H1 (cell line): ENCODE measurements at regions of chr6 and their contacts with region 1.

Region 1: DNA sequence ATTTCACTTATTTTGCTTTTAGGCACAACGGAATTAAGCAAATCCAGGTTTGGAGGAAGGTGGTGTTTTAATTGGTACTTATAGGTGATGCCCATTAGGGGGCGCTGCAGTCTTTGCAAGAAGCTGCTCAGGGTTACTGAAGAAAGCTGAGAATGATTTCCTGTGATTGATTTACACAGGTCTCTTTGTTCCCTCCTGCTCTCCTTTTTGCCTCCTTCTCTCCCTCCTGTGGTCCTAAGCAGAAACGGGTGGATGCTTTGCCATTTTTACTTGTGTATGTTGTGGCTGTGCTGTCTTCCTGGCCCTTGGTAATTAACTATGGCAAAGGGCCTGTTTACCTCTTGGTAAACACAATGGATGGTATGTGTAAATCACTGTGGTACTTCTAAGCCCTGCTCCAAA is 97.8 kb downstream of the ANKS1A start:
- DNase-seq: peak; percentile 25 to 77
- H3K4me3 ChIP-seq: no peak overlapping the region
- H3K27ac ChIP-seq: 0 out of 2 replicates have a peak overlapping the region, but pooled peaks have one; percentile 13
- H3K4me1 ChIP-seq: peaks cover 0 to 6% (median 2%) of the 10 kb centered on the region in 4 experiments; a peak in 4 of 7 replicates
- H3K27me3 ChIP-seq: no peaks in the 10 kb centered on the region
- CTCF ChIP-seq: peak in 2 of 3 experiments; percentile 86; a peak in 3 of 4 replicates
- EP300 ChIP-seq: no peak
- POLR2A ChIP-seq: no peak
- RAD21 ChIP-seq: peak; percentile 94 to 96

Region 2: GRCh38 chr6:35011096-35012041 is 24.5 kb after region 1 on chr6:
- CTCF ChIA-PET with region 1: interaction called, 20 read pairs
- POLR2A ChIA-PET with region 1: no interaction called
- DNase-seq: no peak
- H3K4me3 ChIP-seq: no peak overlapping the region
- H3K27ac ChIP-seq: no peak overlapping the region
- H3K4me1 ChIP-seq: peaks cover 0 to 6% (median 0%) of the 10 kb centered on the region in 4 experiments; a peak in 2 of 7 replicates
- H3K27me3 ChIP-seq: no peaks in the 10 kb centered on the region
- CTCF ChIP-seq: no peak
- EP300 ChIP-seq: no peak
- POLR2A ChIP-seq: no peak
- RAD21 ChIP-seq: no peak

Region 3: GRCh38 chr6:35057449-35058357 is 70.9 kb after region 1 on chr6:
- CTCF ChIA-PET with region 1: interaction called, 20 read pairs
- POLR2A ChIA-PET with region 1: no interaction called
- DNase-seq: no peak
- H3K4me3 ChIP-seq: no peak overlapping the region
- H3K27ac ChIP-seq: no peak overlapping the region
- H3K4me1 ChIP-seq: peaks cover 0 to 1% (median under 1%) of the 10 kb centered on the region in 4 experiments; a peak in 2 of 7 replicates
- H3K27me3 ChIP-seq: no peaks in the 10 kb centered on the region
- CTCF ChIP-seq: no peak
- EP300 ChIP-seq: no peak
- POLR2A ChIP-seq: no peak
- RAD21 ChIP-seq: no peak

Region 4: DNA sequence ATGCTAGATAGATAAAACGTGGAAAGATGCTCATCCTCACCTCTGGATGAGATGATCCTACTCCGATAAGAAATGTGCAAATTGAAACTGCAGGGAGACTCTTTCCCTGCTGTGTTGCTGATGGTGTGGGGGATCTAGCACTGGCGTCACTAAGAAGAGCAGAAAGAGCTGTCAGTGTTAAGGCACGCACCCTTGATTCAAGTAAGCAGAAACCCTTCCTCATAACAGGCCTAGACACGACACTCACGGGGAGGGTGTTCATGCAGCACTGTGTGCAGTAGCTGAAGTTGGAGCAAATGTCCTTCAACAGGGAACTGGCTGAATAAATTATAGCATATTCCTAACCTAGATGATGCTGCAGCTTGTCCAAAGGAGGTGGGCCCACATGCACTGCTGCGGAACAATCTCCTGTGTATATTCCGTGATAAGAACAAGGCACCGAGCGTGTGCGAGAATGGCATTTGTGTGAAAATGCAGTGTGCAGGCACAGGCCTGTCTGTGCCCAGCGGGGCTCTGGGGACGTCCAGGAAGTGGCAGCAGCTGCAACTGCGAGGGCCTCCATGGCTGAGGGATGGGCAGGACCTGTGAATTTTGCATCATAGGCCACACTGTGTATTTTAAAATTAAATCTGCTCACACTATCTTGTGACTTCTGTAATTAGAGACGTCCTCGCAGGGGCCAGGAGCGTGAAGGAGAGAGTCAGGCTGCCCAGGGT is 90.3 kb after region 1 on chr6:
- CTCF ChIA-PET with region 1: interaction called, 52 read pairs
- POLR2A ChIA-PET with region 1: no interaction called
- DNase-seq: no peak
- H3K4me3 ChIP-seq: no peak overlapping the region
- H3K27ac ChIP-seq: no peak overlapping the region
- H3K4me1 ChIP-seq: peaks cover 0 to 9% (median 4%) of the 10 kb centered on the region in 4 experiments; a peak in 5 of 7 replicates
- H3K27me3 ChIP-seq: no peaks in the 10 kb centered on the region
- CTCF ChIP-seq: no peak
- EP300 ChIP-seq: no peak
- POLR2A ChIP-seq: no peak
- RAD21 ChIP-seq: no peak

Region 5: GRCh38 chr6:35120746-35121145 is 133.9 kb after region 1 on chr6:
- CTCF ChIA-PET with region 1: interaction called, 12 read pairs
- POLR2A ChIA-PET with region 1: no interaction called
- DNase-seq: no peak
- H3K4me3 ChIP-seq: no peak overlapping the region
- H3K27ac ChIP-seq: no peak overlapping the region
- H3K4me1 ChIP-seq: no peaks in the 10 kb centered on the region
- H3K27me3 ChIP-seq: no peaks in the 10 kb centered on the region
- CTCF ChIP-seq: no peak
- EP300 ChIP-seq: no peak
- POLR2A ChIP-seq: no peak
- RAD21 ChIP-seq: no peak

Region 6: GRCh38 chr6:35139908-35140655 is 153.2 kb after region 1 on chr6:
- CTCF ChIA-PET with region 1: interaction called, 89 read pairs
- POLR2A ChIA-PET with region 1: interaction called, 3 read pairs
- DNase-seq: peak in 1 of 2 experiments; percentile 54
- H3K4me3 ChIP-seq: no peak overlapping the region
- H3K27ac ChIP-seq: no peak overlapping the region
- H3K4me1 ChIP-seq: peaks cover 0 to 3% (median under 1%) of the 10 kb centered on the region in 4 experiments; a peak in 1 of 7 replicates
- H3K27me3 ChIP-seq: peaks cover 0 to 12% (median 12%) of the 10 kb centered on the region in 4 experiments; a peak in 5 of 7 replicates
- CTCF ChIP-seq: peak in 2 of 3 experiments; percentile 81 to 82; a peak in 3 of 4 replicates
- EP300 ChIP-seq: no peak
- POLR2A ChIP-seq: no peak
- RAD21 ChIP-seq: peak; percentile 97 to 98

Region 7: GRCh38 chr6:35202066-35202546 is 215.3 kb after region 1 on chr6:
- CTCF ChIA-PET with region 1: interaction called, 13 read pairs
- POLR2A ChIA-PET with region 1: no interaction called
- DNase-seq: no peak
- H3K4me3 ChIP-seq: no peak overlapping the region
- H3K27ac ChIP-seq: no peak overlapping the region
- H3K4me1 ChIP-seq: peaks cover 0 to 7% (median 5%) of the 10 kb centered on the region in 4 experiments; a peak in 4 of 7 replicates
- H3K27me3 ChIP-seq: peaks cover 3 to 11% (median 6%) of the 10 kb centered on the region in 4 experiments; a peak in 5 of 7 replicates
- CTCF ChIP-seq: peak in 1 of 3 experiments; percentile 36; a peak in 1 of 4 replicates
- EP300 ChIP-seq: no peak
- POLR2A ChIP-seq: no peak
- RAD21 ChIP-seq: peak in 1 of 2 experiments; percentile 24; a peak in 1 of 4 replicates

Region 8: DNA sequence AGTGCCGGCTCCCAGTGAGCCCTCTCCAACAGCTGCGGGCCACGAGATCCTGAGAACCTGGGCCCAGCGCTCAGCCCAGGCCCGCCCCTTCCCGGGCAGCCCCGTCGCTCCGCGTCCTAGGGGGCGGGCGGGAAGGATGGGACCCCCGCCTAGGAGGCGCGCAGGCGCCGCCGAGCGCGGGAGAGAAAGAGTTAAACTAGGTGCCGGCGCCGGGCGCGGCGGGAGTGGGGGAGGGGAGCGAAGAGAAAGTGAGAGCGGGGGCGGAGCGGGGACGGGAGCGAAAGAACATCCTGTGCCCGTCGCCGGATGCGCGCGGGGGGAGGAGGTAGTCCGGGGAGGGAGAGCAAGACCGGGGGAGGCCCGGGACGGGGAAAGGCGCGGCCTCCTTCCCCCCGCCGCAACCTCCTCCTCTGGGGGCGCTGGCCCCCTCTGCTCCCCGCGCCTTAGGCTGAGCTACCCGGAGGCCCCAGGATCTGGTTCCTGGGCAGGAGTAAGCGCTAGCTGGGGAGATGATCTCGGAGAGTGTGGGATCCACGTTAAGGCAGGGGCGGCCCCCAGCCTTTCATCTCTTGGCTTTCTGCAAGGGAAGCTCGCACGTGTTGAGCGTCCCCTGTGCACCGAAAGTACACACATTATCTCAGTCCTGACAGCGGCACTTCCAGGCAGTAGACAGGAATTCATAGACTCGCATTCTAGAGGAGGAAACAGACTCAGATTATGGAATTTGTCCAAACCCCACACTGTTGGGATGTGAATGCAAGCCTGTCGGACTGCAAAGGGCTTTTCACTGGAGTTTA is 745.1 kb after region 1 on chr6:
- CTCF ChIA-PET with region 1: no interaction called
- POLR2A ChIA-PET with region 1: no interaction called
- DNase-seq: peak in 1 of 2 experiments; percentile 95
- H3K4me3 ChIP-seq: peak overlapping the region; percentile 43 to 91 (median 70)
- H3K27ac ChIP-seq: peak overlapping the region; percentile 92
- H3K4me1 ChIP-seq: peaks cover 13 to 32% (median 25%) of the 10 kb centered on the region in 4 experiments
- H3K27me3 ChIP-seq: peaks cover 0 to 2% (median under 1%) of the 10 kb centered on the region in 4 experiments; a peak in 3 of 7 replicates
- CTCF ChIP-seq: no peak
- EP300 ChIP-seq: peak in 1 of 2 experiments; percentile 89; a peak in 2 of 3 replicates
- POLR2A ChIP-seq: no peak
- RAD21 ChIP-seq: peak in 1 of 2 experiments; percentile 6; a peak in 1 of 4 replicates